Panc1 (cell line): ENCODE measurements at regions of chr6 and their contacts with region 1.

Region 1: GRCh38 chr6:13653296-13653695 is 38.2 kb downstream of the NOL7 start:
- DNase-seq: no peak
- ATAC-seq: no peak
- H3K4me3 ChIP-seq: no peak overlapping the region
- H3K27ac ChIP-seq: no peak overlapping the region; the same call in 1 of the 2 replicates
- H3K4me1 ChIP-seq: no peaks in the 10 kb centered on the region; the same call in 1 of the 2 replicates
- H3K27me3 ChIP-seq: no peaks in the 10 kb centered on the region
- CTCF ChIP-seq: no peak

Region 2: DNA sequence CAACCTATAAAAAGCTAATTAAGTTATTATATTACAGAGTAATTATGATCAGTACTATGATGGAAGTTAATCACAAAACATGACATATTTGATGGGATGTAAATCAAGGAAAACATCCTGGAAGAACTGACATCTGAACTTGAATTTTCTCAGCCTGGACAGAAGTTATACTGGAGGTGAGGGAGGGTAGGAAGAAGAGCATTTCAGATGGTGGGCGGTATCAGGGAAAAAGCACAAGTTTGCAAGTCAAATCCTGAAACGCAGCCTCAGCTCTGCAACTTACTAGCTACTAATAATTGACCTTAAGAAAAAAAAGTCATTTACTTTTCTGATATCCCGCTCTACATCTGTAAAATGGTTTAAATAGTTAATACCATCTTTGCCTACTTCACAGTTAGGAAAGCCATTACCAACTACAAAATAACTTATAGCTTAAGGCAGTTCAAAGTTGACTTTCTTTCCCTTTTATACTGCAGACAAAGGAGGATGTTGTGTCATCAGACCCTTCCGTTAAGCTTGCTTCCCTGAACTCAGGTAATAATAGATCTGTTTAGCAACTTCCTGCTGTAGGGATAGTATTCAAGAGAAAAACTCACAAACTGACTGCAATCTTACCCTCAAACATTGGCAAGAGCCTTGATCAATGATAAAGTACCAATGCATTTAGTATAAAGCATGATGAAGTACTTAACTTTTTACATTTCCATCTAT is 17.2 kb before region 1 on chr6:
- CTCF ChIA-PET with region 1: interaction called, 10 read pairs
- POLR2A ChIA-PET with region 1: no interaction called
- in situ Hi-C with region 1: no loop called
- intact Hi-C with region 1: no loop called
- DNase-seq: no peak
- ATAC-seq: no peak
- H3K4me3 ChIP-seq: no peak overlapping the region
- H3K27ac ChIP-seq: no peak overlapping the region
- H3K4me1 ChIP-seq: no peaks in the 10 kb centered on the region
- H3K27me3 ChIP-seq: no peaks in the 10 kb centered on the region
- CTCF ChIP-seq: no peak

Region 3: GRCh38 chr6:13711733-13712598 is 58.7 kb after region 1 on chr6 and contains the start of gene RANBP9:
- CTCF ChIA-PET with region 1: no interaction called
- POLR2A ChIA-PET with region 1: no interaction called
- in situ Hi-C with region 1: no loop called
- intact Hi-C with region 1: loop called (anchors 10 kb)
- DNase-seq: no peak
- ATAC-seq: peak; percentile 96
- H3K4me3 ChIP-seq: peak within 1 kb of the TSS; percentile 71 to 77
- H3K27ac ChIP-seq: peak within 1 kb of the TSS; percentile 98
- H3K4me1 ChIP-seq: peaks cover 15% of the 10 kb centered on the region
- H3K27me3 ChIP-seq: no peaks in the 10 kb centered on the region
- CTCF ChIP-seq: peak; percentile 4; the same call in 1 of the 2 replicates
- total RNA-seq, gene RANBP9: 44.5 TPM

Region 4: DNA sequence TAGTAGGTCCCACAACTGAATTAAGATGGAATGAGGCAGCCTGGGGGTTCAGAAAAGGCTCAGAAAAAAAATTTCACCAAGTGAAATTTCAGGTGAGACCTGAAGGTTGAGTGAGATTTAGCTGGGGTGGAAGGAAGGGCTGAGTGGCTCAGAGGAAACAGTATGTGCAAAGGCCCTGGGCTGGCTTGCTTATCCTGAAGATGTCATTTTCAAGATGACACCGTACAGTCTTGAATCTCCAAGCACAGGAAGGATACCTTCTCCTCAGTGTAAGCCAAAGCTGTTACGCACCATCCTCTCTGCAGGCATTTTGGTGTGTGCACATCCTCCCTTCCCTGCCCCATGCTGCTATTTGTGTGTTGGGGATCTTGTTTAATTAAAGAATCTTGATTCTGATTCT is 101.3 kb after region 1 on chr6:
- CTCF ChIA-PET with region 1: no interaction called
- POLR2A ChIA-PET with region 1: interaction called, 13 read pairs
- in situ Hi-C with region 1: no loop called
- intact Hi-C with region 1: no loop called
- DNase-seq: no peak
- ATAC-seq: no peak
- H3K4me3 ChIP-seq: no peak overlapping the region
- H3K27ac ChIP-seq: no peak overlapping the region
- H3K4me1 ChIP-seq: no peaks in the 10 kb centered on the region
- H3K27me3 ChIP-seq: no peaks in the 10 kb centered on the region
- CTCF ChIP-seq: no peak